B cell (primary cell): ENCODE measurements at regions of chr19 and their contacts with region 1.

Region 1: DNA sequence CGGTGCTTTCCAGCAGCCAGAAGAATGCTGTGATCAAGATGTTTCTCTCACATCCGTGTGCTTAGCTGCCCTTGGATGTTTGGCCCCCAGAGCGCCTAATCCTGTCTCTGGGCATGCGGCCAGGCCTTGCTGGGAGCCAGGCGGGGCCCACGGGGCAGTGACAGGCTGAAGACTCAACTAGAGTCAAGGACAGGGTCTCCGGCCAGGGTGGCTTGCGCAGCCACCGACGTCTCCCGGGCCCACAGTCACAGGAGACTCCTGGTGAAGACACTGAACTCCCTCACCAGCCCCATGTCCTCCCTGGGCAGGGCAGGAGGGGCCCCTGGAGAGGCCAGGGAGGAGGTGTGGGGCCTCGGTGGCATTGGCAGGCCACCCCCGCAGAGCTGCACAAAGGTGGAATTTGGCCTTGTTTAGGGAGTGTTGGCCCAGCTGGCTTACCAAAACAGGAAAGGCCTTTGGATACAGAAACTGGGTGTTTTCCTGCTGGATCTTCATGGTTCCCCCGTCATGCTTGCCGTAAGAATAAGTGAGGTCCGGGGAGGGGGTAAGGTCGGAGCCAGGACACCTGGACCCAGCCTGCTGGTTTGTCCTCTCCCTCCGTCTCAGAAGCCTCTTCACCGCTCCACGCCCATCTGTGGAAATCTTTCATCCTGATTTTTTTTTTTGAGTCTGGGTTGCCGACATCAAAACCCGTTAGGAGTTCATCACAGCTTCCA is 10.0 kb upstream of the NDUFS7 start:
- DNase-seq: no peak
- ATAC-seq: no peak
- H3K4me3 ChIP-seq: no peak overlapping the region
- H3K4me3 Mint-ChIP-seq: no peak overlapping the region
- H3K27ac ChIP-seq: no peak overlapping the region
- H3K27ac Mint-ChIP-seq: no peak overlapping the region
- H3K4me1 ChIP-seq: no peaks in the 10 kb centered on the region
- H3K4me1 Mint-ChIP-seq: no peaks in the 10 kb centered on the region
- H3K27me3 ChIP-seq: no peaks in the 10 kb centered on the region
- H3K27me3 Mint-ChIP-seq: no peaks in the 10 kb centered on the region
- CTCF ChIP-seq: no peak

Region 2: GRCh38 chr19:879711-880438 is 493.8 kb before region 1 on chr19:
- CTCF ChIA-PET with region 1: no interaction called
- POLR2A ChIA-PET with region 1: interaction called, 11 read pairs
- intact Hi-C with region 1: no loop called
- DNase-seq: no peak
- ATAC-seq: no peak
- H3K4me3 ChIP-seq: no peak overlapping the region
- H3K4me3 Mint-ChIP-seq: no peak overlapping the region
- H3K27ac ChIP-seq: no peak overlapping the region
- H3K27ac Mint-ChIP-seq: no peak overlapping the region
- H3K4me1 ChIP-seq: peaks cover 0 to 3% of the 10 kb centered on the region in 2 donors
- H3K4me1 Mint-ChIP-seq: no peaks in the 10 kb centered on the region
- H3K27me3 ChIP-seq: no peaks in the 10 kb centered on the region
- H3K27me3 Mint-ChIP-seq: no peaks in the 10 kb centered on the region
- CTCF ChIP-seq: no peak

Region 3: GRCh38 chr19:1001538-1002166 is 372.0 kb before region 1 on chr19:
- CTCF ChIA-PET with region 1: no interaction called
- POLR2A ChIA-PET with region 1: no interaction called
- intact Hi-C with region 1: no loop called
- DNase-seq: peak; percentile 80
- ATAC-seq: peak; percentile 77
- H3K4me3 ChIP-seq: no peak overlapping the region
- H3K4me3 Mint-ChIP-seq: peak overlapping the region; percentile 59
- H3K27ac ChIP-seq: no peak overlapping the region
- H3K27ac Mint-ChIP-seq: no peak overlapping the region
- H3K4me1 ChIP-seq: peaks cover 13 to 14% of the 10 kb centered on the region in 2 donors
- H3K4me1 Mint-ChIP-seq: peaks cover 11% of the 10 kb centered on the region
- H3K27me3 ChIP-seq: peaks cover 0 to 56% (median 29%) of the 10 kb centered on the region in 4 experiments
- H3K27me3 Mint-ChIP-seq: peaks cover 24% of the 10 kb centered on the region
- CTCF ChIP-seq: peak; percentile 98

Region 4: GRCh38 chr19:1275260-1275975 is 98.3 kb before region 1 on chr19 and contains the start of gene FAM174C:
- CTCF ChIA-PET with region 1: interaction called, 37 read pairs
- POLR2A ChIA-PET with region 1: interaction called, 5 read pairs
- intact Hi-C with region 1: loop called (anchors 1 kb)
- DNase-seq: peak; percentile 99
- ATAC-seq: peak; percentile 82
- H3K4me3 ChIP-seq: peak within 1 kb of the TSS; percentile 30 to 85 (median 75)
- H3K4me3 Mint-ChIP-seq: peak within 1 kb of the TSS; percentile 89
- H3K27ac ChIP-seq: peak within 1 kb of the TSS; percentile 93 to 97
- H3K27ac Mint-ChIP-seq: peak within 1 kb of the TSS; percentile 94
- H3K4me1 ChIP-seq: peaks cover 39 to 63% of the 10 kb centered on the region in 2 donors
- H3K4me1 Mint-ChIP-seq: peaks cover 49% of the 10 kb centered on the region
- H3K27me3 ChIP-seq: no peaks in the 10 kb centered on the region
- H3K27me3 Mint-ChIP-seq: no peaks in the 10 kb centered on the region
- CTCF ChIP-seq: peak; percentile 15
- total RNA-seq, gene FAM174C: 34.5 and 41.1 TPM in 2 replicates

Region 5: GRCh38 chr19:1315470-1316231 is 58.0 kb before region 1 on chr19:
- CTCF ChIA-PET with region 1: interaction called, 26 read pairs
- POLR2A ChIA-PET with region 1: interaction called, 3 read pairs
- intact Hi-C with region 1: loop called (anchors 5 kb)
- DNase-seq: peak; percentile 63
- ATAC-seq: peak; percentile 60
- H3K4me3 ChIP-seq: peak overlapping the region in 1 of 5 experiments; percentile 28
- H3K4me3 Mint-ChIP-seq: no peak overlapping the region
- H3K27ac ChIP-seq: no peak overlapping the region
- H3K27ac Mint-ChIP-seq: no peak overlapping the region
- H3K4me1 ChIP-seq: peaks cover 9 to 12% of the 10 kb centered on the region in 2 donors
- H3K4me1 Mint-ChIP-seq: no peaks in the 10 kb centered on the region
- H3K27me3 ChIP-seq: peaks cover 0 to 57% (median 15%) of the 10 kb centered on the region in 4 experiments
- H3K27me3 Mint-ChIP-seq: peaks cover 9% of the 10 kb centered on the region
- CTCF ChIP-seq: peak; percentile 50

Region 6: GRCh38 chr19:1789261-1790041 is 415.8 kb after region 1 on chr19:
- CTCF ChIA-PET with region 1: no interaction called
- POLR2A ChIA-PET with region 1: no interaction called
- intact Hi-C with region 1: no loop called
- DNase-seq: no peak
- ATAC-seq: no peak
- H3K4me3 ChIP-seq: no peak overlapping the region
- H3K4me3 Mint-ChIP-seq: no peak overlapping the region
- H3K27ac ChIP-seq: no peak overlapping the region
- H3K27ac Mint-ChIP-seq: no peak overlapping the region
- H3K4me1 ChIP-seq: peaks cover 0 to 3% of the 10 kb centered on the region in 2 donors
- H3K4me1 Mint-ChIP-seq: no peaks in the 10 kb centered on the region
- H3K27me3 ChIP-seq: peaks cover 0 to 39% (median 2%) of the 10 kb centered on the region in 4 experiments
- H3K27me3 Mint-ChIP-seq: peaks cover 8% of the 10 kb centered on the region
- CTCF ChIP-seq: no peak